ENCODE measurements at regions of chr12 and their contacts with region 1.

Region 1: DNA sequence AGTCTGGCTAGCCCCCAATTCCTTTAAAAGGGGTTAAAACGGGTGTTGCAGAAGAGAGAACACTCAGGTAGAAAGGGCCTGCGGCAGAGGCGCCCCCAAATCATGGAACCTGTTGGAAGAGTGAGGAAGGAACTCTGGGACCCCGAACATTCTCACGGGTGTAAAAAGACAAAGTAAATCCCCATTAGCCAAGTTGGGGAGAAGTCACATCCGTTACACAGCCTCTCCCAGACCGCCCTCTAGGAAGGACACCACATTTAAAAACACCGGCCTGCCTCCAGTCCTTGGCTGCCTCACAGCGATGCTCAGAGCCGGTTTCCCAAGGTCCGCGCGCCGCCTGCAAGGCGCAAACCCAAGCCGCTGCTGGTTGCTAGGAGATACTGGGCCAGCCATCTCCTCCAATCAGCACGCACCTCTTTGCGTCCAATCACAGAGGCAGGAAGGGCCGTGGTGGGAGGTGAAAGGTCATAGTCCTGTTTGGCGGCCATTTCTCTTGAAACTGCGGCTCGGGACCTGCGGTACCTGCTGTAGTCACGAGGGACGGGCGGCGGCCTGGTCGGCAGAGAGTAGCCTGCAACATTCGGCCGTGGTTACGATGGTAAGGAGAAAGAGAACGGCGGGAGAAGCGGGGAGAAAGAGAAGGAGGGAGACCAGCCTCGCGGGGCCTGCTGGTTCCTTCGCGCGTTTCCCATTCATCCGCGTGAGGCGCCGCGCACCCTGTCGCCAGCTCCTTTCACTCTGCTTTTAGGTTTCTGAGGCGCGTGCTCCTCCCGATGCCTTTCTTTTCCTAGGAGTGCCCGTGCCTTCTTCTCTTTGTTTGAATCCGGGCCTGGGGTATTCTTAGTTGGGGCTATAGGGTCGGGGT is at the start of gene SNRPF:
- DNase-seq: peak; percentile 93
- H3K4me3 Mint-ChIP-seq: peak within 1 kb of the TSS; percentile 2
- H3K27ac Mint-ChIP-seq: no peak within 1 kb of the TSS
- H3K4me1 Mint-ChIP-seq: peaks cover 28% of the 10 kb centered on the region
- H3K27me3 Mint-ChIP-seq: peaks cover 7% of the 10 kb centered on the region
- total RNA-seq, gene SNRPF: 65.8 and 77.2 TPM in 2 replicates

Region 2: GRCh38 chr12:95548539-95549391 is 309.9 kb before region 1 on chr12:
- intact Hi-C with region 1: loop called (anchors 2 kb)
- DNase-seq: peak; percentile 62
- H3K4me3 Mint-ChIP-seq: peak overlapping the region; percentile 88
- H3K27ac Mint-ChIP-seq: peak overlapping the region; percentile 63
- H3K4me1 Mint-ChIP-seq: peaks cover 45% of the 10 kb centered on the region
- H3K27me3 Mint-ChIP-seq: peaks cover 15% of the 10 kb centered on the region

Region 3: DNA sequence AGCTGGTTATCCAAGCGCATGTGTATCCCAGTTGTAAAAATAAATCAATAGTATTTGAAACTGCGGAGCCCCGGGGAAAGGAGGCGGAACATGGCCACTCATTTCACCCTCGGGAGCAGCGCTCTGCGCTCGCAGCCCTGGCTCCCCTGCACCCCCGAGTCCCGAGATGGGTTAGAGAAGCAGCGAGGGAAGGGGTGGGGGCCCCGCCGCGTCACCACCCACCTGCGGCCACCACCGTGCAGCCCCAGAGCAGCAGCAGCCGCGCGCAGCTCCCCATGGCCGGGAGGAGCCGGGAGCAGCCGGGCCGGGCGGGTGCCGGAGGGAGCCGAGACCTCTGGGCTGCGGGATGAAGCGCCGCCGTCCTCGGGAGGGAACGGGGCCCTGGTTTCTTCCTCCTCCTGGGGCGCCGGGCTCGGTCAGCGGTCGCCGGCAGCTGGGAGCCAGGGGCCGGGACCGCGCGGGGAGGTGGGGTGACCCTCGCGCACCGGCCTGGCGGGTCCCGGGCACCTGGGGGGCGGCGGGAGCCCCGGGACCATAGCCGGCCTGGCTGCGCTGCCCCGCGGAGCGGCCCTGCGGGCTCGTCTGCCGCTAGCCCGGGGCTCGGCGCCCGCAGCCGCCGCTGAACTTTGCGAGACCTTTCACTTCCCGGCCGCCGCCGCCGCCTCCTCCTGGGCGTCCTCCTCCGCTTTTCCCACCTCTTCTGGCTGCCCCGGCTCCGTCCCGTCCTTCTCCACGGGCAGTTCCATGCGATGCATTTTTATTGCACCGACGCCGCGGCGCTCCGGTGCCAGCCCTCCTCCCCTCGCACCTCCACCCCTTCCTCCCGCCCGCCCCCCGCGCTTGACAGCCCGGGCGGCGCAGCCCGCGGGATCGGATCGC is 68.4 kb before region 1 on chr12 and contains the start of gene NTN4:
- intact Hi-C with region 1: loop called (anchors 5 kb)
- DNase-seq: peak; percentile 16
- H3K4me3 Mint-ChIP-seq: peak within 1 kb of the TSS; percentile 70
- H3K27ac Mint-ChIP-seq: no peak within 1 kb of the TSS
- H3K4me1 Mint-ChIP-seq: peaks cover 9% of the 10 kb centered on the region
- H3K27me3 Mint-ChIP-seq: peaks cover 84% of the 10 kb centered on the region
- total RNA-seq, gene NTN4: not detected in 2 replicates

Region 4: DNA sequence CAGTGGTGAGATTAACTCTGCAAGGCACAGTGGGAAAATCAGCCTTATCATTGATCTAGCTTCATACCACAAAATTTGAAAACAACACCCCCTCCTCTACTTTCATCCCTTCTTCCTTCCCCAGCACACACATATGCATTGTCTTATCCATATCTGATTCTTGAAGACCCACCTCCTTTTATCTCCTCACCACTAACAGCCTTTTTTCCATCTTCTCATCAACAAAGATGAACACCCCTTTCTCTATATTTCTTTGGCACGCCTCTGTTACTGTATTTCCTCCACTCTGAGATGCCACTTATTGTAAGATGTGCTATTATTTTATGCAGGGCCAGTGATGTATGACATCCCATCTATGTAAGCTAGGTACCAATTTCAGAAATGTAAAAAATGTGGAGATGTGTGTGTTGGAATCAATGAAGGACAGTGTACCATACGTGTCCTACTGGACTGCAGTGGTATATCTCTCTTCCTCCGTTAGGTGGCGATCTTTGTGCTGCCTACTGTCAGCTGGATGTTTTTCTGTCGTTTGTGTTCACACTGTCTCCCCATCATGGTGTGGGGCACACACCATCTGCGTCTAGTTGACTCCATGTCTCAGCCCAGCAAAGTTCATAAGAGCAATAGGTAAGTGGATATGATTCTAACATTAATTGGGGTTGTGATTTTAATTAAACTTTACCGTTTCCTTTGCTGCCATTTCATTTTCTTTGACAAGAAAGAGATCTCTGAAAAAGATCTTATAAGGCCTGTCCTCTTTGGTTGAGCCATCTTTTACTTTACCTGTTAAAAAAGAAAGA is 59.7 kb after region 1 on chr12:
- intact Hi-C with region 1: loop called (anchors 2 kb)
- DNase-seq: peak; percentile 34
- H3K4me3 Mint-ChIP-seq: no peak overlapping the region
- H3K27ac Mint-ChIP-seq: no peak overlapping the region
- H3K4me1 Mint-ChIP-seq: no peaks in the 10 kb centered on the region
- H3K27me3 Mint-ChIP-seq: peaks cover 18% of the 10 kb centered on the region

Region 5: DNA sequence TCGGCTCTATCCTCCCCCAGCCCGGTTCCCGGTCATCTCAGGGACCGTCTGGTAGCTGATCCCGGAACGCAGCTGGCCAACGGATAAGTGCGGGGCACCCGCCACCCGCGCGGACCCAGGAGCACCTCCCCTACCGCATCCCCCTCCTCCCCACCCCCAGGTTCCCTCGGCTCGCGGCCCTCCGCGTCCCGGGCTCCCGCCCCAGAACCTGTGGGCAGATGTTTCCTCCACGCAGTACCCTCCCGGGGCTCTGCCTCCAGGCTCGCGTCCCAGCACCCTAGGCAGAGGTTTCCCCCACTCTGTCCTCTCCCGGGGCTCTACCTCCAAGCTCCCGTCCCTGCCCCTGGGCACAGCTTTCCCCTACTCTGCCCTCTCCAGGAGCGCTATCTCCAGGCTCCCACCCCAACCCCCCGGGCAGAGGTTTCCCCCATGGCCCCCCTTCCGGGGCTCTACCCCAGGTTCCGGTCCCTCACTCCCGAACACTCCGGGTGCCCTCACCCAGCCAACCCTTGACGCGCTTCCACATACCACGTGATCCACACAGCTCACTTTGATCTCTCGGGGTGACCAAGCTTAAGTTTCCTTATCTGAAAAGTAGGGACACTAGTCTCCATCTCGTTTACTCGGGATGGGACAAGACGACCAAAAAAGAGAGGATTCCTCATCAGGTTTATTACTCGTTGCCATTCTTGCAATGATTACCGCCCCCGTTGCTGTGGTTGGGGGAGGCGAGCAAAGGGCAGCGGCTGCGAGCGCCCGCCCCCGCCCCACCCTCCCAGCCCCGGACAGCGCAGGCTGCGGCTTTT is 84.0 kb after region 1 on chr12 and contains the start of gene CCDC38:
- intact Hi-C with region 1: loop called (anchors 2 kb)
- DNase-seq: peak; percentile 77
- H3K4me3 Mint-ChIP-seq: peak within 1 kb of the TSS; percentile 82
- H3K27ac Mint-ChIP-seq: peak within 1 kb of the TSS; percentile 76
- H3K4me1 Mint-ChIP-seq: peaks cover 5% of the 10 kb centered on the region
- H3K27me3 Mint-ChIP-seq: peaks cover 18% of the 10 kb centered on the region
- total RNA-seq, gene CCDC38: 0.07 TPM in 1 of 2 replicates, not detected in the other

Region 6: DNA sequence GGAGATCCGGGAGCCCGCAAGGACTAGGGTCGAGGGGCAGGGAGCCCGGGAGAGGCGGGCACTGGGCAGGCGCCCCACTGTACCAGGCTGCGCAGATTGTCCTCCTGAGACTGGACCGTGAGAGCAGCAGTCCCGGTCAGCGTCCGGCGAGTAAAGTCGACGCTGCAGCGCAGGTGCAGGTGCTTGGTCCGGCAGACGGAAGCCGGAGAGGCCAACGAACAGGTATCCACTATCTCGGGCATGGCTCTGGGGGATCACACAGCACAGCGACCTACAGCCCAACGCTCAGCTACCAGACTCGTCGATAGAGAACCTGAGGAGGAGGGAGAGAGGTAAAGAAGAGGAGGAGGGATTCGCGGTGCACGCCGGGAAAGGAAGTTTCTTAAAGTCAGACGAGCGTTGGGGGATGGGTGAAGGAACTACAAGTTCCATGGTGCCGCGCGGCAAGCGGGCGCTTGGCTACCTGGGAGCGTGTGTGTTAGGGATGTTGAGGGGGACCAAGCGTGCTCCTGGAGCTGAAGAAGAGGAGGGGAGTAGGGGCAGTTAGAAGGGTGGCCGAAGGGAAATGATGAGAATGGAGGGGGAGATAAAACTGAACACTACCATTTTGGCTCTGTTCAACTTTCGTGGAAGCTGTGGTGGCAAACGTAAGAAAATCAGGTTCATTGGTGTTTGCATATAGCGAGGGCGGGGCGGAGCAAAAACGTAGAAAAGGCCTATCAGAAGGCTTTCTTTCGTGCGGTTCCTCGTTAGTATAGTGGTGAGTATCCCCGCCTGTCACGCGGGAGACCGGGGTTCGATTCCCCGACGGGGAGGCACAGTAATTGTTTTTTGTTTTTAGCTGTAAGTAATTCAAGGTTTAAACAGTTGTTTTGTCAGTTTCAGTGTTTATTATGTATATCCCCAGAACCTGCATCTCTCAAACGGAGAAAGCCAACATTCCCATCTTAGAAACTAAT is 176.8 kb after region 1 on chr12 and contains the start of gene LTA4H:
- intact Hi-C with region 1: loop called (anchors 1 kb)
- DNase-seq: peak; percentile 94
- H3K4me3 Mint-ChIP-seq: no peak within 1 kb of the TSS
- H3K27ac Mint-ChIP-seq: no peak within 1 kb of the TSS
- H3K4me1 Mint-ChIP-seq: peaks cover 8% of the 10 kb centered on the region
- H3K27me3 Mint-ChIP-seq: no peaks in the 10 kb centered on the region
- total RNA-seq, gene LTA4H: 63.6 and 65.2 TPM in 2 replicates